Posterior vena cava (tissue), 2 donors: ENCODE measurements at regions of chr12 and their contacts with region 1.

Region 1: GRCh38 chr12:64256166-64256800 is 34.2 kb upstream of the KICS2 start:
- DNase-seq: no peak

Region 2: DNA sequence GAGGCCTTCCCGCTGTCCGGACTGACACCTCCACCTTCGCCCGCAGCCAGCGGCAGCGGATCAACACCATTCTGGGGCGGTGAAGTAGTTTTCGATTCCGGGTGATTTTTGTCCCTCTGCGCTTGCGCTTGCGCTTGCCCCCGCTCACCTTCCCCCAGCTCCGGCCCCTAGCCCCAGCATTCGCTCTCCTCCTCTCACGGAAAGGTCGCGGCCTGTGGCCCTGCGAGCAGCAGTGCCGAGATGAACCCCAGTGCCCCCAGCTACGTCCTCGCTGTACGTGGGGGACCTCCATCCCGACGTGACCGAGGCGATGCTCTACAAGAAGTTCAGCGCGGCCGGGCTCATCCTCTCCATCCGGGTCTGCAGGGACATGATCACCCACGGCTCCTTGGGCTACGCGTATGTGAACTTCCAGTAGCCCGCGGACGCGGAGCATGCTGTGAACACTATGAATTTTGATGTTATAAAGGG is 434.5 kb before region 1 on chr12:
- intact Hi-C with region 1: loop called in 1 of 2 experiments (anchors 5 kb)
- DNase-seq: peak; percentile 83

Region 3: GRCh38 chr12:63841571-63841970 is 414.7 kb before region 1 on chr12:
- intact Hi-C with region 1: loop called (anchors 2 kb)
- DNase-seq: no peak

Region 4: GRCh38 chr12:64286521-64286920 is 30.2 kb after region 1 on chr12:
- intact Hi-C with region 1: no loop called
- DNase-seq: no peak